ENCODE measurements at regions of chr17 and their contacts with region 1.

Region 1: DNA sequence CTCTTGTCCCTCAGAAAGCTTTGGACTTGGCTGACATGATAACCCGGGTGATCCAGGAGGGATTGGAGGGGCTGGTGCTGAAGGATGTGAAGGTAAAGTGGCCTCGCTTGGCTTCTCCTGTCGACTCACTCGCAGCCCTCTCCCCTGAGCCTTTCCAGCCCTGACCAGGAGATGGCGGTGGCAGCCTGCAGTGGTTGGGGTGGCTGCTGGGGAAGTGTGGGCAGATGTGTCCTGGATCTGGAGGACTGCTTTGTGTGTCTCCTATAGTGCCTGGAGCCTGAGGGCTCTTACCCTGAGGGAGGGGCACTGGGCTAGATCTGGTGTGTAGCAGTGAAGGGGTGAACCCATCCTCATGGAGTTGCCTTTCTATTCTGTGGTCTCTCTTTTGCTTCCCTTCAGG is 17.9 kb downstream of the LIG3 start:
- DNase-seq: peak; percentile 89
- ATAC-seq: peak; percentile 83

Region 2: GRCh38 chr17:35022536-35023063 is 24.4 kb after region 1 on chr17:
- intact Hi-C with region 1: loop called (anchors 2 kb)
- DNase-seq: peak; percentile 79
- ATAC-seq: peak; percentile 93

Region 3: DNA sequence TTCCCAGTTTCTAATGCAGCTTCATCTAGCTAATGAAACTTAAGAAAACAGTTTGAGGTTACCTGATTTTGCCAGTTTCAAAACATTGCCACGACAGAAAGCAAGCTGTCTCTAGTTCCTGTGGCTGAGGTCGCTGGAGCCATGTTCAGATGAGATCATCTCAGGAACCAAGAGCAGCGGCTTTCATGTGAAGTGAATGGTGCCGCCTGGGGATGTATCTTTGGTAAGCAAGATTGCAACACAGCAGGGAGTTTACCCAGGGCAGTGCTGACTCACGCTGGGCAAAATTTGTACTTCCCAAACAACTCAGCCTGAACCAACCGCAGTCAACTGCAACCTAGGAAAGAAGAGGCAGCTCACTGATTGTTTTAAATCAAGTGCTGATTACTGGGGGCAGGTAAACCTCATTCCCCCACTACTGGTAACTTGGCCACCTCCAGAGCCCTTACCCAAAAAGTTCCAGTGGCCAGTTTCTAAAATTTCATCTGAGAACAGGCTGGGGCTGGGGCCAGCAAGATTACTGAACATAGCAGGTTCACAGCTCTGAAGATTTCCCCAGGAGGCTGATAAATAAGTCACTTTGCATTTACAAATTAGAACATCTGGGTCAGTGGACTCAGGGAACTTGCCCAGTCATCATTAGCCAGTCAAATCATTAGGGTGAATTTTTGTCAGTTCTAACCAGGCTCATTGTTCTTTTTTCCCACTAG is 65.5 kb after region 1 on chr17 and contains the start of gene RFFL:
- intact Hi-C with region 1: loop called (anchors 1 kb)
- DNase-seq: peak; percentile 88
- ATAC-seq: peak; percentile 98
- total RNA-seq, gene RFFL: 11.2 TPM

Region 4: GRCh38 chr17:35088881-35089585 is 90.8 kb after region 1 on chr17:
- intact Hi-C with region 1: loop called (anchors 1 kb)
- DNase-seq: peak; percentile 96
- ATAC-seq: peak; percentile 97

Region 5: GRCh38 chr17:35119368-35120165 is 121.4 kb after region 1 on chr17 and contains the start of gene RAD51D:
- intact Hi-C with region 1: loop called (anchors 1 kb)
- DNase-seq: peak; percentile 89
- ATAC-seq: peak; percentile 97
- total RNA-seq, gene RAD51D: 4.8 TPM

Measured in Right ventricle myocardium inferior (tissue), 1 donor.